GM10248 (cell line): ENCODE measurements at regions of chr22 and their contacts with region 1.

Region 1: GRCh38 chr22:45686004-45686403 is 14.4 kb downstream of the ATXN10 start:
- DNase-seq: no peak
- CTCF ChIP-seq: no peak

Region 2: GRCh38 chr22:45656577-45656976 is 29.4 kb before region 1 on chr22:
- CTCF ChIA-PET with region 1: no interaction called
- POLR2A ChIA-PET with region 1: no interaction called
- DNase-seq: no peak
- CTCF ChIP-seq: no peak

Region 3: GRCh38 chr22:45696227-45696626 is 10.2 kb after region 1 on chr22:
- CTCF ChIA-PET with region 1: interaction called, 10 read pairs
- POLR2A ChIA-PET with region 1: no interaction called
- DNase-seq: peak; percentile 65
- CTCF ChIP-seq: no peak